H1 (cell line): ENCODE measurements at regions of chr12 and their contacts with region 1.

Region 1: DNA sequence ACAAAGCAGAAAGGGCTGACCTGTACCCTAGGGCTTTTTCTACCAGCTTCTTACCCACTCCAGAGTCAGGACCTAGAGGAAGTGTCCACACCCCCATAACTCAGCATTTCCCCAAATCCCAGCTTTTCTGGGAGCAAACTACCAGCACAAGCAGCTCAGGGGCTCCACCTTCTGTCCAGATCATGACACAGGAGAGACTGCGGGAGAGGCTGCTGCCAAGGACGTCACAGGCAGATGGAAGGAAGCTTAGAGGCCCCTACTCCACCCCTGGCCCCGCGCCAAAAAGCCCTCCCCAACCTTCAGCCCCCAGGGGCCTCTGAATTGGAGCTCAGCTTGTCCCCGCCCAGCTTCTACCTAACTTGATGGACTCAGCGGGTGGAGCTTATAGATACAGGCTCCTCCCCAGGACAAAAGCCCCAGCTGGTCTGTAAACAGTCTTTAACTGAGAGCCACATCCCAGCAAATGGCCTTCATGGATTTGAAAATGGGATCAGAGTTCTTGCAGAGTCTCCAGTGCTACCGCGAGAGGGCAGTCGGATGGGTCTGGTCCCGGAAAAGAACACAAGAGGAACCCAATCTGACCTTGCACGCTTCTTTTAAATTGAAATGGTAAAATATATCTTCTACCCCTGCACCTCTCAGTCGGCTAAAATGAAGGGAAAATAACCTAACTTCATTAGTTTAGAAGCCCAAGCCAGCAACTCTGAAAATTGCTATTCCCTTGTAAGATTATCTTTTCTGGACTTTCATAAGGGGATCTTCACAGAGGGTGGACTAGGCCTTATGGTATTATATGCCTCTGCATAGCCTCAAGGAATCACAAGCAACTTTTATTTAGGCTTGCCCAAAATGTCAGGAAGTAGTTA is 6.8 kb upstream of the BAZ2A start:
- DNase-seq: peak; percentile 92 to 95
- H3K4me3 ChIP-seq: peak overlapping the region; percentile 86 to 90 (median 88); a peak in 7 of 8 replicates
- H3K27ac ChIP-seq: peak overlapping the region; percentile 27; the same call in 1 of the 2 replicates
- H3K4me1 ChIP-seq: peaks cover 8 to 36% (median 24%) of the 10 kb centered on the region in 4 experiments
- H3K27me3 ChIP-seq: no peaks in the 10 kb centered on the region
- CTCF ChIP-seq: peak; percentile 67 to 70 (median 68)
- EP300 ChIP-seq: peak in 1 of 2 experiments; percentile 72; a peak in 1 of 3 replicates
- POLR2A ChIP-seq: peak in 1 of 2 experiments; percentile 35; a peak in 1 of 3 replicates
- RAD21 ChIP-seq: peak; percentile 68 to 73

Region 2: DNA sequence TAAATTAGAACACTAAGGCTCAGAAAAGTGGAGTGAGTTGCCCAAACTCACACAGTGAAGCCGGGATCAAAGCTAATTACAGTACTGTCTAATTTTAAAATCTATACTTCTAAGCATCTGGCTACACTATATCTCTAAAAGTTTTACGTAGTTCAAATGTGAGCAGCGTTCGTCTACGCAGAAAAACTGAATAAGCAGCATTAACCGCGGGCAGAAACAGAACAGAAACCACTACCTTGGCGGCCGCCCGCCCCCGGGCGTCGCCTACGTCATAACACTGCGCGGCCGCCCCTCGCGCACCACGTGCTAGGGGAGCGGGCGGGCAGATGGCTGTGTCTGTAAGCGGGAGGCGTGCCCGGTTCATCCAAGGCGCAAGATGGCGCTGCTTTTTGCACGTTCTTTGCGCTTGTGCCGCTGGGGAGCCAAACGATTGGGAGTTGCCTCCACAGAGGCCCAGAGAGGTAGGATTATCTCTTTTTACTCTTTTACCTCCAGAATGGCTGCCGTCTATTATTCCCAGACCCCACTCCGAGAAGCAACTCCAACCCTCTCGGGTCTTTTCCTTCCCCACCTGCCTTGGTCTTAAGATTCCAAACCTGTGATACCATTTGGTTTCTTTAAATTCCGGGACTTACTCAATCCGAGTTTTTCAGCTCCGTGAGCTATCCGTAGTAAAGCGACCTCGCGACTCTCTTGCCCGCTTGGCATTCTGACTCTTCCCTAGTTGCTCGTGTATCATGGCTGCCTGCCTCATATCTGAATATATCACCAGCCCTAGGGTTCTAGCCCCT is 168.5 kb before region 1 on chr12 and contains the start of gene SPRYD4:
- CTCF ChIA-PET with region 1: no interaction called
- POLR2A ChIA-PET with region 1: no interaction called
- DNase-seq: peak; percentile 59 to 90
- H3K4me3 ChIP-seq: peak within 1 kb of the TSS; percentile 80 to 99 (median 87)
- H3K27ac ChIP-seq: peak within 1 kb of the TSS; percentile 90
- H3K4me1 ChIP-seq: peaks cover 3 to 6% (median 5%) of the 10 kb centered on the region in 4 experiments
- H3K27me3 ChIP-seq: no peaks in the 10 kb centered on the region
- CTCF ChIP-seq: peak; percentile 19 to 34 (median 21); a peak in 3 of 4 replicates
- EP300 ChIP-seq: 0 out of 3 replicates have a peak, but pooled peaks of 1 of the 2 experiments have one; percentile 13
- POLR2A ChIP-seq: peak; percentile 98
- RAD21 ChIP-seq: no peak; a peak in 1 of 4 replicates
- total RNA-seq, gene SPRYD4: 4.0 and 4.3 TPM in 2 replicates

Region 3: GRCh38 chr12:56601503-56601902 is 35.4 kb before region 1 on chr12:
- CTCF ChIA-PET with region 1: interaction called, 29 read pairs
- POLR2A ChIA-PET with region 1: interaction called, 6 read pairs
- DNase-seq: no peak
- H3K4me3 ChIP-seq: no peak overlapping the region
- H3K27ac ChIP-seq: no peak overlapping the region
- H3K4me1 ChIP-seq: peaks cover 0 to 6% (median 2%) of the 10 kb centered on the region in 4 experiments; a peak in 2 of 7 replicates
- H3K27me3 ChIP-seq: no peaks in the 10 kb centered on the region
- CTCF ChIP-seq: peak; percentile 10 to 49 (median 34); a peak in 2 of 4 replicates
- EP300 ChIP-seq: no peak
- POLR2A ChIP-seq: no peak
- RAD21 ChIP-seq: peak; percentile 13; a peak in 2 of 4 replicates

Region 4: GRCh38 chr12:56614627-56615026 is 22.3 kb before region 1 on chr12:
- CTCF ChIA-PET with region 1: interaction called, 107 read pairs
- POLR2A ChIA-PET with region 1: interaction called, 9 read pairs
- DNase-seq: no peak
- H3K4me3 ChIP-seq: no peak overlapping the region
- H3K27ac ChIP-seq: no peak overlapping the region
- H3K4me1 ChIP-seq: no peaks in the 10 kb centered on the region
- H3K27me3 ChIP-seq: no peaks in the 10 kb centered on the region
- CTCF ChIP-seq: no peak
- EP300 ChIP-seq: no peak
- POLR2A ChIP-seq: no peak
- RAD21 ChIP-seq: no peak

Region 5: GRCh38 chr12:56716458-56716857 is 79.5 kb after region 1 on chr12:
- CTCF ChIA-PET with region 1: interaction called, 10 read pairs
- POLR2A ChIA-PET with region 1: interaction called, 6 read pairs
- DNase-seq: no peak
- H3K4me3 ChIP-seq: no peak overlapping the region
- H3K27ac ChIP-seq: no peak overlapping the region
- H3K4me1 ChIP-seq: peaks cover 10 to 21% (median 14%) of the 10 kb centered on the region in 4 experiments
- H3K27me3 ChIP-seq: no peaks in the 10 kb centered on the region
- CTCF ChIP-seq: no peak
- EP300 ChIP-seq: no peak
- POLR2A ChIP-seq: peak in 1 of 2 experiments; percentile 18; a peak in 1 of 3 replicates
- RAD21 ChIP-seq: no peak